CD4-positive, alpha-beta T cell (primary cell): ENCODE measurements at regions of chr4 and their contacts with region 1.

Region 1: DNA sequence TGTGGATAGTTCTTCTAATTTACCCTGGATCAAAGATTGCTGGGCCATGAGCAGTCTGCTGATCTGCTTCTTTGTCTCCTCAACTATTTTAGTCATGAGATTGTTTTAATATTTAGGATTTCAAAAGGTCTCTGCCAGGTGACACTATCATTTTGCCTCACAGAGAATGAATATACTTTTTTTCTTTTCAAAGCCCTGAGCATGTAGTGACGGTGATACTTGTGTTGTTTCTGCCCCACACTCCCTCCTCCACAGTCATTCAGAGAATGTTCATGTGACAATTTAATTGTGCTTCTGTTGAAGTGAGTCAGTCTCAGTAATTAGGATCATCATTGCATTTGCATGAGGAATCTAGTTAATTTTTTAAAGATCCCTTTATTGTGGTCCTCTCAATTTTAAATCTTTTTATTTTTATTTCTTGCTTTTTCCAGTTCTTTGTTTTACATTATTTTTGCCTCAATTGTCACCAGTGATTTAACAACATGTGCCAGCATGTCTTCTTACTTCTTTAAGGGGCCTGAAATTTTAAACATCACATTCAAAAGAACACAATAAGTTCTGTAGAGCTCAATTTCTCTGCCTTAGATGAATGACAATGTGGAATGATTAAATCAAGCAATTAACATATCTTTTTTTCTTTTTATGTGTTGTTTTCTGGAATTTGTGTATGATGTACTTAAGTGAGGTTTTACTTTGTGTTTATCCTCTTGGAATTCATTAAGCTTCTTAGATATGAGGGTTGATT is 12.3 kb downstream of the MMRN1 start:
- DNase-seq: no peak
- ATAC-seq: no peak
- H3K4me3 ChIP-seq: no peak overlapping the region
- H3K4me3 Mint-ChIP-seq: no peak overlapping the region
- H3K27ac ChIP-seq: no peak overlapping the region
- H3K27ac Mint-ChIP-seq: no peak overlapping the region
- H3K4me1 ChIP-seq: no peaks in the 10 kb centered on the region
- H3K4me1 Mint-ChIP-seq: no peaks in the 10 kb centered on the region
- H3K27me3 ChIP-seq: no peaks in the 10 kb centered on the region
- H3K27me3 Mint-ChIP-seq: no peaks in the 10 kb centered on the region
- CTCF ChIP-seq: no peak

Region 2: DNA sequence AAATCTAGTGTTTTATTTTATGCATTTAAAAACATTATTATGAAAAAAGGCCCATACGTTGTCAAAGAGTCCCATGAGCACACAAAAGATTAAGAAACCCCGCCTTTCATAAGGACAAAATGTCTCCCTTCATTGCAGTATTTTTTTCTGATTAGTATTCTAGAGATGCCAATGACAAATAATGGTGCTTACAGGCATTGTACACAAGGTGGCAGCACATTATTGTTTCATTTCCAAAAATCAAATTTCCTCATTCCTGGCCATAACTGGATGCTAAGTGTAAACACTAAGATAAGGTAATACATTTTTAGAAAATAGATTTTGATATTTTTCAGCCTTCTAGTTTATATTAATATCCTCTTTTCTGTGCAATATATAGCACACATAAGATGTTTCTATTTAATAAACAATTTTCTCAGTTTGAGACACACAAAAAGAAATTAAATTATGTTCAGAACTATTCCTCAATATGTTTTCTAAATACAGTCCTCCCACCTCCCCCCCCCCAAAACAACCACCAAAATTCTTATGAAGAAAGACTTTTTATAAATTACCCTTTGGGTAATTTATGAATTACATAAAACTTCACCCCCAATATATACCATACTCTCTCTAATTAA is 748.0 kb before region 1 on chr4:
- CTCF ChIA-PET with region 1: no interaction called
- POLR2A ChIA-PET with region 1: no interaction called
- intact Hi-C with region 1: loop called (anchors 2 to 5 kb)
- DNase-seq: peak in 4 of 14 experiments; percentile 4 to 62 (median 46)
- ATAC-seq: peak; percentile 69
- H3K4me3 ChIP-seq: no peak overlapping the region
- H3K4me3 Mint-ChIP-seq: no peak overlapping the region
- H3K27ac ChIP-seq: no peak overlapping the region
- H3K27ac Mint-ChIP-seq: no peak overlapping the region
- H3K4me1 ChIP-seq: no peaks in the 10 kb centered on the region
- H3K4me1 Mint-ChIP-seq: no peaks in the 10 kb centered on the region
- H3K27me3 ChIP-seq: no peaks in the 10 kb centered on the region
- H3K27me3 Mint-ChIP-seq: peaks cover 3% of the 10 kb centered on the region
- CTCF ChIP-seq: peak; percentile 87

Region 3: GRCh38 chr4:89226665-89227574 is 680.0 kb before region 1 on chr4:
- CTCF ChIA-PET with region 1: no interaction called
- POLR2A ChIA-PET with region 1: no interaction called
- intact Hi-C with region 1: loop called (anchors 1 to 5 kb)
- DNase-seq: peak; percentile 62 to 88 (median 72)
- ATAC-seq: peak; percentile 94
- H3K4me3 ChIP-seq: no peak overlapping the region
- H3K4me3 Mint-ChIP-seq: peak overlapping the region; percentile 18
- H3K27ac ChIP-seq: no peak overlapping the region
- H3K27ac Mint-ChIP-seq: no peak overlapping the region
- H3K4me1 ChIP-seq: no peaks in the 10 kb centered on the region
- H3K4me1 Mint-ChIP-seq: peaks cover 5% of the 10 kb centered on the region
- H3K27me3 ChIP-seq: no peaks in the 10 kb centered on the region
- H3K27me3 Mint-ChIP-seq: no peaks in the 10 kb centered on the region
- CTCF ChIP-seq: peak; percentile 91

Region 4: GRCh38 chr4:89482248-89482647 is 424.7 kb before region 1 on chr4:
- CTCF ChIA-PET with region 1: no interaction called
- POLR2A ChIA-PET with region 1: no interaction called
- intact Hi-C with region 1: loop called in 1 of 2 experiments (anchors 10 kb)
- DNase-seq: peak in 3 of 14 experiments; percentile 7 to 21 (median 19)
- ATAC-seq: no peak
- H3K4me3 ChIP-seq: no peak overlapping the region
- H3K4me3 Mint-ChIP-seq: no peak overlapping the region
- H3K27ac ChIP-seq: no peak overlapping the region
- H3K27ac Mint-ChIP-seq: no peak overlapping the region
- H3K4me1 ChIP-seq: no peaks in the 10 kb centered on the region
- H3K4me1 Mint-ChIP-seq: no peaks in the 10 kb centered on the region
- H3K27me3 ChIP-seq: no peaks in the 10 kb centered on the region
- H3K27me3 Mint-ChIP-seq: no peaks in the 10 kb centered on the region
- CTCF ChIP-seq: no peak

Region 5: DNA sequence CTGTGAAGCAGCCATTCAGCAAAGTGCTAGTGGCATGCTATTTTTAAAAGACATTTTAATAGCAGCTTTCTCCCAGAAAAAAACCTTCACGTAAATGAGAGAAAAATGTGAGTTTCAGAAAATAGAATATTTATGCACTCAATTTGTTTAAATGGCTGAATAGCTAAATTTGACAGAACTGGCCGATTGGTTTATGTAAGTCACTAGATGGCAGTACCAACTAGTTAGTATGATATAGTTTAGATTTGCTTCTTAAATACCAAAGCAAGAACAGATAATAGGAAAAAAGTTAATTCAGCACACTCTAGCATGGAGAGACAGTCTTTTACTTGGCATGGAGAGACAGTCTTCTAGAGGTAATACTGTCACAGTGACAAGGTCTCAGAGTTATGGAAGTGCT is 320.1 kb before region 1 on chr4:
- CTCF ChIA-PET with region 1: no interaction called
- POLR2A ChIA-PET with region 1: no interaction called
- intact Hi-C with region 1: loop called in 1 of 2 experiments (anchors 5 kb)
- DNase-seq: peak in 1 of 14 experiments; percentile 11
- ATAC-seq: no peak
- H3K4me3 ChIP-seq: no peak overlapping the region
- H3K4me3 Mint-ChIP-seq: no peak overlapping the region
- H3K27ac ChIP-seq: no peak overlapping the region
- H3K27ac Mint-ChIP-seq: no peak overlapping the region
- H3K4me1 ChIP-seq: no peaks in the 10 kb centered on the region
- H3K4me1 Mint-ChIP-seq: no peaks in the 10 kb centered on the region
- H3K27me3 ChIP-seq: no peaks in the 10 kb centered on the region
- H3K27me3 Mint-ChIP-seq: peaks cover 14% of the 10 kb centered on the region
- CTCF ChIP-seq: no peak

Region 6: GRCh38 chr4:89752932-89753581 is 153.9 kb before region 1 on chr4:
- CTCF ChIA-PET with region 1: no interaction called
- POLR2A ChIA-PET with region 1: no interaction called
- intact Hi-C with region 1: no loop called
- DNase-seq: no peak
- ATAC-seq: no peak
- H3K4me3 ChIP-seq: no peak overlapping the region
- H3K4me3 Mint-ChIP-seq: no peak overlapping the region
- H3K27ac ChIP-seq: no peak overlapping the region
- H3K27ac Mint-ChIP-seq: no peak overlapping the region
- H3K4me1 ChIP-seq: no peaks in the 10 kb centered on the region
- H3K4me1 Mint-ChIP-seq: no peaks in the 10 kb centered on the region
- H3K27me3 ChIP-seq: no peaks in the 10 kb centered on the region
- H3K27me3 Mint-ChIP-seq: no peaks in the 10 kb centered on the region
- CTCF ChIP-seq: no peak

Region 7: GRCh38 chr4:89981789-89982334 is 74.9 kb after region 1 on chr4:
- CTCF ChIA-PET with region 1: no interaction called
- POLR2A ChIA-PET with region 1: no interaction called
- intact Hi-C with region 1: no loop called
- DNase-seq: no peak
- ATAC-seq: no peak
- H3K4me3 ChIP-seq: no peak overlapping the region
- H3K4me3 Mint-ChIP-seq: no peak overlapping the region
- H3K27ac ChIP-seq: no peak overlapping the region
- H3K27ac Mint-ChIP-seq: no peak overlapping the region
- H3K4me1 ChIP-seq: no peaks in the 10 kb centered on the region
- H3K4me1 Mint-ChIP-seq: no peaks in the 10 kb centered on the region
- H3K27me3 ChIP-seq: no peaks in the 10 kb centered on the region
- H3K27me3 Mint-ChIP-seq: no peaks in the 10 kb centered on the region
- CTCF ChIP-seq: no peak